Activated T-helper 2 cell treated with anti-CD3 and anti-CD28 coated beads, Interferon-gamma antibody, Interleukin-2, Interleukin-4, amounts not matched to agents 10 μg/mL and 5 μg/mL and 100 μg/mL, durations not matched to agents 14 hours and 24 hours and 36 hours (primary cell): ENCODE measurements at regions of chr10 and their contacts with region 1.

Region 1: DNA sequence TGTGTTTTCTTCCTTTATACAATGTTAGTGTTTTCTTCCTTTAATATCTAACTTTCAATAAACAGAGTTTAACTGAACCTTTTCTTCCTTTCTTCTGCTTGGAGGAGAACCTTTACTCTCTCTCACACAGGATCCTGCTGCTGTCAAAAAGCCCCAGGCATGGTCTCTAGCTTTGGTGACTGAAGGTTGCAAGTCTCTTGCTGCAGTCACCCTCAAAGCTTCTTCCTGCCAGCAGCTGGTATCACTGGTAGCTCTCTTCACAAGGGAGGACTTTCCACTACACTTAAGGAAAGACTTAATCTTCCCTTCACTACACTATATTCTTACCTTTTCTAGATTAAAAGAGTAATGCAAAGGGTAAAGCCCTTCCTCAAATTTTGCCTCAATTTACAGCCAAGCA is 153.4 kb downstream of the SGMS1 start:
- DNase-seq: no peak
- H3K4me3 Mint-ChIP-seq: no peak overlapping the region
- H3K27ac Mint-ChIP-seq: no peak overlapping the region
- H3K4me1 Mint-ChIP-seq: peaks cover 51% of the 10 kb centered on the region
- H3K27me3 Mint-ChIP-seq: no peaks in the 10 kb centered on the region

Region 2: DNA sequence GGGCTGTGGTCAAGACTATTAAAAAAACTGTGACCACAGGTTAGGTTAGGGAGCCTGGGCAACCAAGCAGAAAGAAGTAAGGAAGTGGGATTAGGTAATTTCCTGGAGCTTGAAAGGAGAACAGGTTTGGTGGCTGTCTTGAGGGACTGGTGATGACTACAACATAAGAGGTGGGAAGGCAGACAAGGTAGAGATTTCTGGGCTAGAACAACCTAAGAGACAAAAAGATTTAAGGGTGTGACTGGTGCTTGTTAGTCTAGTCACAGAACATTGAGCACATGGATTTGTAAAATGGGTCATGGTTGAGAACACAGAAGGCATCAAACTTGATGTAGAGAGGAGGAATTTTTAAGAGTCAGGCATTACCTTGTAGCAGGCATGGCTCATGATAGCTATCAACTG is 95.3 kb before region 1 on chr10:
- intact Hi-C with region 1: no loop called
- DNase-seq: no peak
- H3K4me3 Mint-ChIP-seq: no peak overlapping the region
- H3K27ac Mint-ChIP-seq: no peak overlapping the region
- H3K4me1 Mint-ChIP-seq: peaks cover 7% of the 10 kb centered on the region
- H3K27me3 Mint-ChIP-seq: no peaks in the 10 kb centered on the region

Region 3: DNA sequence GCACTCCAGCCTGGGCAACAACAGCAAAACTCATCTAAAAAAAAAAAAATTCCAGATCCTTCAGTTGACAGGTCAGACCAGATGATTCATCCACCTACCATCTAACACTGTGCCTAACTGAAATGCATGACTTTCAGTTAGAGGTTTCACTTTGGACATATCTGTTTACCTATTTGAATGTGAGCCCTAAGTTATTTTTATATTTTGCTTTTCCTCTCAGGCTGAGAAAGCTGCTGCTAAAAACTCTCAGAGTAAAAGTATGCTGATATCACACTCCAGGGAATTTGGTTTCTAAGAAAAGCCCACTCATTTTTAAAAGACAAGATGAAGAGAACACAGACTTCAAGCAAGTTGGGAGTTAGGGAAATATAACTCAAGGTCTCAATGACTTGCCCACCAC is 27.4 kb after region 1 on chr10:
- intact Hi-C with region 1: loop called (anchors 2 kb)
- DNase-seq: no peak
- H3K4me3 Mint-ChIP-seq: no peak overlapping the region
- H3K27ac Mint-ChIP-seq: peak overlapping the region; percentile 69
- H3K4me1 Mint-ChIP-seq: peaks cover 51% of the 10 kb centered on the region
- H3K27me3 Mint-ChIP-seq: no peaks in the 10 kb centered on the region

Region 4: DNA sequence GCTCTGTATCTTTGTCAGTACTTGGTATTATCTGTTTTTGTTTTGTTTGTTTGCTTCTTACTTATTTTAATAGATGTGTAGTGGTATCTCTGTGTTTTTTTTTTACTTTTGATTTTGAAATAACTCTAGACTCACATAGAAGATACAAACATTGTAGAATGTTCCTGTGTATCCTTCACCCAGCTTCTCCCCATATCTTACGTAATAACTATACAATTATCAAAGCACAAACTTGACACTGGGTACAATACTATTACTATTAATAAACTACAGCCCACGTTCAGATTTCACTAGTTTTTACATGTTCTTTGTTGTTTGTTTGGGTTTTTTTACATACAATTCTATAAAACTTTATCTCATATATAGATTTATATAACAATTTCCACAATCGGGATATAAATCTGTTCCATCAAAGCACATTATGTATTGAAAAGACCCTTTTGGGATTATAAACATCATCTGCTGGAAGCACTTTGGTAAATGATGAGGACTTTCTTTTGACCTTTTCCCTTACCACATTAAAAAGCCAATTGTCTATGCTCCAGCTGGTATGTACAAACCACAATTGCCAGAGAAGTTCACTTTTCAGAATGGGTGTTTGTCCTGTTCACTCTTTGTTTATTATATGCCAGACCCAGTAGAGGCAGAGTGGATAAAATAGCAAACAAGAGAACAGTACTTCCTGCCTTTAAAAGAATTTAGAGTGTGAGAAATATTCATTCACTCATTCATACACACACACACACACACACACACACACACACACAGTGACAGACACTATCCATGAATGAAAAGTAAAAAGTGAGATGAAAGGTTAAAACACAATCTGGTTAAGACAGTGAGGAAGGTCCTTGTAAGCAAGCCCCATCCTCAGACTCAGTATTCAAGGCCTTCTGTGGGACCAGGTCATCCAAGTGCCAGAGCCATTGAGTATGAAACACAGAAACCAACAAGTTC is 40.5 kb after region 1 on chr10:
- intact Hi-C with region 1: no loop called
- DNase-seq: no peak
- H3K4me3 Mint-ChIP-seq: no peak overlapping the region
- H3K27ac Mint-ChIP-seq: peak overlapping the region; percentile 18
- H3K4me1 Mint-ChIP-seq: peaks cover 78% of the 10 kb centered on the region
- H3K27me3 Mint-ChIP-seq: peaks cover 4% of the 10 kb centered on the region

Region 5: DNA sequence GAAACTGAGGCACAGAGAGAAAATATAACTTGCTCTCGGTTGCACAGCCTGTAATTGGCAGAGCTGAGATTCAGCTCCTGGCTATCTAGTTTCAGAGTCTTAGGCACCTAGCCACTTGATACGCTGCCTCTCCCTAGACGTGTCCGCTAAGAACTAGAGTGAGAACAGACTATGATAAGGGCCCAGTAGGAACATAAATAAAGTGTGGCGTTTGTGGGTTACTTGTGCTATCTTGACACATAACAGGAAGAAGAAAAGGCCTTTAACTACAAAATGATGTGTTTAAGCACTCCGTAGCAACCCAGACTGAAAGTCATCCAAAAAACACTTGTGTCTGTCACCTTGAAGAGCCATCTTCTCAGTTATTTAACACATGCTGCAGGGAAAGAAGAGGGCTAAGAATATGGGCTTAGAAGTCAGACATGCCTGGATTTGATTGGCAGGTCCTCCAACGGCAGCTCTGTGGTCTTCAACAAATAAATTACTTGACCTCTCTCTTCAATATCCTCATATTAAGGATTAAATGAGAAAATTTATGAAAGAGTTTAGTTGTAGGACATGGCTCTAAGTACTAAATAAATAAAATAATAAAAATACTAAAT is 57.2 kb after region 1 on chr10:
- intact Hi-C with region 1: no loop called
- DNase-seq: no peak
- H3K4me3 Mint-ChIP-seq: no peak overlapping the region
- H3K27ac Mint-ChIP-seq: no peak overlapping the region
- H3K4me1 Mint-ChIP-seq: peaks cover 14% of the 10 kb centered on the region
- H3K27me3 Mint-ChIP-seq: peaks cover 2% of the 10 kb centered on the region

Region 6: DNA sequence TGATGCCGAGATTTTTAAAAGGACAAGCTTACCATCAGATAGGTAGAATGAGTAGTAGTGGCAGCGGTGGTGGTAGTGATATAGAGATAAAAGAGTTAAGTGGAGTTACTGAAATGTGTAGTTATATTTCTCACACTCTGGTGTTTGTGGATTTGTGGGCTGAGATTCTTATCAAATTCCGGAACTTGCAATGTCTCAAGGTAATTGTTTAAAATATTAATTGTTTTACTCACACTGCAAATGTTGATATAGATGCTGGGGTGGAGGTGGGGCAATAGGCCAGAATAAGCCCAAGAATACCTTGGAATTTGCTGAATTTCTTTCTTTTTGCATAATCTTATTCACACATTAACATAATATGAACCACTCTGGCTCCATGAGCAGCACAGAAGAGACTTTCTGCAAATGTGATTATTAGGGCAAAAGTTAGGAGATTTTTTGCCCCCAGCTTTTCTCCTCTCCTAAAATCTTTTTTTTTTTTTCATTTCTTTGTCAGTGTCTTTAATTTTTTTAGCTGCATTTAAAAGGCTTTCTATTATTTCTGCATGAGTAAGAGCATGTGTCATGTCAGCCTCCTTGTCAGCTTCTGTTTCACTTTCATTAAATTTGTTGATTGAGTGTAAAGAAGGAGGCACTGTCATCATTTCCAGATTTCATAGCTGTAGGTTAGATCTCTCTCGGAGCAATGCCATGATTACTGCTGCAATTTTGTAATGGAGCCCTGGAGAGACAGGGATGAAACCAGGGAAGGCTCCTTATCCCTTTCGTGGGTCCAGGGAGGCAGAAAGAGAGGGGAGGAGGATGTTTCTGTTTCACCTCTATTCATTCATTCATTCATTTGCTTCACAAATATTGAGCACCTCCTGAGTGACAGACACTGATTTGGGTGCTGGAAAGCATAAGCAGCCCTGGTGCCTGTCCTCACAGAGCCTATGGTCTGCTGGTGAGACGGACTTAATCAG is 166.6 kb after region 1 on chr10:
- intact Hi-C with region 1: no loop called
- DNase-seq: peak; percentile 35
- H3K4me3 Mint-ChIP-seq: peak overlapping the region; percentile 45
- H3K27ac Mint-ChIP-seq: peak overlapping the region; percentile 35
- H3K4me1 Mint-ChIP-seq: peaks cover 27% of the 10 kb centered on the region
- H3K27me3 Mint-ChIP-seq: peaks cover 72% of the 10 kb centered on the region